Panc1 (cell line): ENCODE measurements at regions of chr2 and their contacts with region 1.

Region 1: GRCh38 chr2:24971536-24972314 is at the start of gene DNAJC27:
- DNase-seq: peak; percentile 88
- ATAC-seq: peak; percentile 98
- H3K4me3 ChIP-seq: peak within 1 kb of the TSS; percentile 72 to 88
- H3K27ac ChIP-seq: peak within 1 kb of the TSS; percentile 97
- H3K4me1 ChIP-seq: peaks cover 6% of the 10 kb centered on the region; the same call in 1 of the 2 replicates
- H3K27me3 ChIP-seq: no peaks in the 10 kb centered on the region
- CTCF ChIP-seq: no peak
- total RNA-seq, gene DNAJC27: 4.9 TPM

Region 2: GRCh38 chr2:24809316-24810007 is 162.3 kb before region 1 on chr2:
- CTCF ChIA-PET with region 1: no interaction called
- POLR2A ChIA-PET with region 1: no interaction called
- in situ Hi-C with region 1: no loop called
- intact Hi-C with region 1: no loop called
- DNase-seq: no peak
- ATAC-seq: no peak
- H3K4me3 ChIP-seq: no peak overlapping the region
- H3K27ac ChIP-seq: peak overlapping the region; percentile 18; the same call in 1 of the 2 replicates
- H3K4me1 ChIP-seq: peaks cover 8% of the 10 kb centered on the region; the same call in 1 of the 2 replicates
- H3K27me3 ChIP-seq: no peaks in the 10 kb centered on the region
- CTCF ChIP-seq: no peak

Region 3: DNA sequence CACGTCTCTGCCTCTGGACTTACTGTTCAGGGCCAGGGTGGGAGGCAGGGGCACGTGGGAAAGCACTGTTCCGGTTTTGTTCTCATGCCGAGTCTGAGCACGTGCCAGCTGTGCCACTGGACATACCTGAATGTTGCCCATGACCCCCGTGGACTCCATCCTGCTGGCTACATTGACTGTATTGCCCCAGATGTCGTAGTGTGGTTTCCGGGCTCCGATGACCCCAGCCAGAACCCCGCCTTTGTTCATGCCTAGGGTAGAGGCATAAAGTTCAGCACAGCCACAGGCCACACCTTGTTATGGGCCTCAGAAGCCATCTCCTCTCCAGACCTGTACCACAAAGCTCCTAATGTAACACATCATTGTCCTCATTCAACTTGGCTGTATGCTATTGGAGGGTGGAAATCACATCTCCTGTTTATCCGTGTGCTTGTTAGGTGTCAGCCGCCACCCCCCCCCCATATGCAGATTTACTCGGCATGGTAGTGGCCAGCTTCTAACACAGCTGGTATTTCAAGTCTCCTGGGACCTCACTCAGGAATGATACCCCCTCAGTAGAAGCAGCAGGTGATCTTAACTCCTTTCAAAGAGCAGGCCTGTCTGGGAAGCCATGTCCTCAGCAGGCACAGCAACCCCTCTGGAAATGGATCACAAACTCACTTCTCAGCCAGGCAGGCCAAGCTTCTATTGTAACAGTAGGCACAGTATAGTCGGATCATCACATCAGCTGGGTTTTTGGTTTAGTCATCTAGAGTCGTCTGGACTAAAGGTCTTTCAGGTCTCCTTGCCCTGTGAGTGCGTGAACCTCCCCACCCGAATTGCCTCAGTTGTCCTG is 150.9 kb before region 1 on chr2:
- CTCF ChIA-PET with region 1: no interaction called
- POLR2A ChIA-PET with region 1: no interaction called
- in situ Hi-C with region 1: no loop called
- intact Hi-C with region 1: no loop called
- DNase-seq: no peak
- ATAC-seq: no peak
- H3K4me3 ChIP-seq: no peak overlapping the region
- H3K27ac ChIP-seq: no peak overlapping the region
- H3K4me1 ChIP-seq: no peaks in the 10 kb centered on the region; the same call in 1 of the 2 replicates
- H3K27me3 ChIP-seq: no peaks in the 10 kb centered on the region
- CTCF ChIP-seq: no peak

Region 4: GRCh38 chr2:25131567-25132298 is 160.0 kb after region 1 on chr2:
- CTCF ChIA-PET with region 1: interaction called, 30 read pairs
- POLR2A ChIA-PET with region 1: no interaction called
- in situ Hi-C with region 1: no loop called
- intact Hi-C with region 1: loop called (anchors 1 kb)
- DNase-seq: no peak
- ATAC-seq: peak; percentile 47; the same call in 1 of the 2 replicates
- H3K4me3 ChIP-seq: peak overlapping the region in 1 of 2 experiments; percentile 9; a peak in 1 of 4 replicates
- H3K27ac ChIP-seq: no peak overlapping the region
- H3K4me1 ChIP-seq: no peaks in the 10 kb centered on the region
- H3K27me3 ChIP-seq: no peaks in the 10 kb centered on the region
- CTCF ChIP-seq: no peak